ENCODE measurements at regions of chr11 and their contacts with region 1.

Region 1: GRCh38 chr11:45110562-45110961 is 35.9 kb upstream of the PRDM11 start:
- DNase-seq: peak; percentile 64
- H3K4me3 ChIP-seq: no peak overlapping the region
- H3K27ac ChIP-seq: no peak overlapping the region
- H3K4me1 ChIP-seq: no peaks in the 10 kb centered on the region
- H3K27me3 ChIP-seq: peaks cover 6 to 7% of the 10 kb centered on the region in 2 experiments
- CTCF ChIP-seq: peak; percentile 52 to 68
- POLR2A ChIP-seq: no peak

Region 2: GRCh38 chr11:44993971-44994704 is 116.4 kb before region 1 on chr11:
- CTCF ChIA-PET with region 1: no interaction called
- POLR2A ChIA-PET with region 1: no interaction called
- dilution Hi-C with region 1: no loop called
- intact Hi-C with region 1: no loop called
- DNase-seq: no peak
- H3K4me3 ChIP-seq: no peak overlapping the region
- H3K27ac ChIP-seq: no peak overlapping the region
- H3K4me1 ChIP-seq: no peaks in the 10 kb centered on the region
- H3K27me3 ChIP-seq: peaks cover 2 to 5% of the 10 kb centered on the region in 2 experiments
- CTCF ChIP-seq: no peak
- POLR2A ChIP-seq: no peak

Region 3: DNA sequence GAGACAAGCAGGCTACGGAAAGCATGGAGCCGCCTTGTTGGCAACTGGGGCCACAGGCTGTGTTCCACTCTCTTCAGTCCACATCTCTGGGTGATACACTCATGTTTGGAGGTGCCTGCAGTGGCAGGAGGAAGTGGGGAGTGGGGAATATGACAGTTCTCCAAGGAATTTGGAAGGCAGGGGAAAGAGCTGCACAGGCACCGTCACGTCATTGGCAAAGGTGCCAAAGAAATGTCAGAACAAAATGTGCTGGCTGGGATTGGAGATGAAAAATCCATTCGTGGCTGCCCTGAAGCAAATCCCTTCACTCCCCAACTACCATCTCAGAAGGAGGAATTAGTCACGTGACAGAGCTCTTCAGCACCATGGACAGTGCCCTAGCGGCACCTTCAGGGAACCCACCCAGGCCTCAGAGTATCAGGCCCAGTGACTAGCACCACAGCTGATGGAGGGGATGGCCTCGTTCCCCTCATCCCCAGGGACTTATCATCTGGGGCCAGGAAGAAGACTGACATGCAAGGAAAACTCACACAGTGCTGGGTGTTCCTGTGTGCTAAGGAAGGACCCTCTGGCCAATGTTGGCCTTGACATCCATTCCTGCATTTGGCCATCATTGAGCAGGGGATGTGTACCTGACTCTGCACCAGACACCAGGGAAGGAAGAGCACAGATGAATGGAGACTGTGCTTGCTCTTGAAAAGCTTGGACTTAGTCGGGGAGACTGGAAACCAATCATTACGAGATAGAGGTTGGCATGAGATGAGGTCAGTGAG is 12.7 kb before region 1 on chr11:
- CTCF ChIA-PET with region 1: interaction called, 21 read pairs
- POLR2A ChIA-PET with region 1: no interaction called
- dilution Hi-C with region 1: no loop called
- intact Hi-C with region 1: no loop called
- DNase-seq: peak; percentile 43
- H3K4me3 ChIP-seq: no peak overlapping the region
- H3K27ac ChIP-seq: no peak overlapping the region
- H3K4me1 ChIP-seq: peaks cover 5% of the 10 kb centered on the region
- H3K27me3 ChIP-seq: peaks cover 0 to 3% of the 10 kb centered on the region in 2 experiments
- CTCF ChIP-seq: no peak
- POLR2A ChIP-seq: no peak

Region 4: DNA sequence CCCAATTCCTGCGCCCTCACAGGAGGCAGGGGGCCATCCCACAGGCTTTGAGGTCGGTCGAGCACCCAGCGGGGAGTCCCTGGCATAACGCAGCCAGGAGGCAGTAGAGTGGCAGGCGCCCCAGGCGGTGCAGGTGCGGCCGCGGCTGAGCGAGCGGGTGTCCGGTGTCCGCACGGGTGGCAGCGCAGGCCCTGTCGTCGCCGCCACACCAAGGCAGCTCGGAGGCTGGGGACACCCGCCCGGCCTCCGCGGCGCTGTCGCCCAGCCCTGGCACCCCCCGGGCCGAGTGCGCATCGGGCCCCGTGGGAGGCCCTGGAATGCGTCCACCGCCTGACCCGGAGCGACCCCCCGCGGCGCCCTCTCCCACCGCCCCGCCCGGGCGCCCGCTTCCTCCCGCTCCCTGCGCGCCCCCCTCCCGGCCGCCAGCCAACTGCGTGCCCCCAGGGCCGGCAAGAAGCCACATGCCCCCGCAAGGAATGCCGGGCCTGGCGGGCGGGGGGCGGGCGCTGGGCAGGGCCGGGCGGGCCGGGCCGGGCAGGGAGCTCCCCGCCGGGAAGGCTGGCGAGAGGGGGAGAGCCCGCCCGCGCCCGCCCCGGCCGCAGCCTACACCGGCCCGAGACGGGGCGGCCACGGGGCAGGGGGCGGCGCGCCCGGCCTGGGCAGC is 69.7 kb after region 1 on chr11:
- CTCF ChIA-PET with region 1: interaction called, 24 read pairs
- POLR2A ChIA-PET with region 1: no interaction called
- dilution Hi-C with region 1: no loop called
- intact Hi-C with region 1: loop called (anchors 5 kb)
- DNase-seq: peak; percentile 40
- H3K4me3 ChIP-seq: peak overlapping the region in 2 of 3 experiments; percentile 33
- H3K27ac ChIP-seq: peak overlapping the region; percentile 46
- H3K4me1 ChIP-seq: peaks cover 12% of the 10 kb centered on the region
- H3K27me3 ChIP-seq: no peaks in the 10 kb centered on the region
- CTCF ChIP-seq: peak; percentile 31 to 62
- POLR2A ChIP-seq: no peak

Region 5: GRCh38 chr11:45252134-45252855 is 141.7 kb after region 1 on chr11:
- CTCF ChIA-PET with region 1: interaction called, 29 read pairs
- POLR2A ChIA-PET with region 1: no interaction called
- dilution Hi-C with region 1: no loop called
- intact Hi-C with region 1: no loop called
- DNase-seq: peak; percentile 14
- H3K4me3 ChIP-seq: no peak overlapping the region
- H3K27ac ChIP-seq: no peak overlapping the region
- H3K4me1 ChIP-seq: no peaks in the 10 kb centered on the region
- H3K27me3 ChIP-seq: peaks cover 2 to 8% of the 10 kb centered on the region in 2 experiments
- CTCF ChIP-seq: peak; percentile 71 to 76
- POLR2A ChIP-seq: no peak

Region 6: DNA sequence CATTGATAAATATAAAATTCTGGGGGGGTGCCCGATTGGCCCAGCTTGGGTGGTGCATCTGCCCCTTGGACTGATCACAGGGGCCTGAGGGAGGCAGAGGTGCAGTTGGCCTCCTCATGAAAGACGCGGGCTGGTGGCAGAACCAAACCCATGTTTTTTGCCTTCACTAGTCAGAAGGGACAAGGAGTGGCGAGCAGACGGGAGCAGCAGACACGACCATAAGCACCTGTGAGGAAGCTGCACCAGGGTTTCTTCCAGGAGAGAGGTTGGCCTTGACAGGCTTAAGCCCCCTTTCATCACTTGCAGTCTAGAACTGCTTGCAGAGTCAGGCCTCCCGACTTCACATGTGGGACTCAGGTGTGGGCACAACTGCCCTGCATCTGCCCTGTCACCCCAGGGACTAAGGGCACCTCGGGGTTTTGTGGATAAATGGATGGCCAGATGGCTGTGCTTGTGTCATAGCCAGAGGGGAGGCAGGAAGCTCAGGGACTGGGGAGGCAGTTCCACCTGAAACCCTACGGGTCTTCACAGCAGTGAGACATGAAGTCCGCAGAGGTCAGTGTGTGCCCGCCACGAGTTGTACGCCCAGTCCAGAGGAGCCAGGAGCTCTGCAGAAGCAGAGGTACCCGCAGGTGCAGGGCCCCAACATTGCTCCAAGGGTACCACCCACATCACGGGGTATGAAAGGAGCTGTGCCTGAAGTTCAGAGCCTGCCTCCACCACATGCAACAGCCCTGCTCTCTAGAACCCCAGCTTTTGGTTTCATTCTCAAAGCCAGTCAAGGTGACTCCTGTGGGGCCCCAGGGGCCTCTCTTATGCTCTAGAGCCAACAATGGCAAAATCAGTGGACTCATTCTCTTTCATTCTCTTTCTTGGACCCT is 193.8 kb after region 1 on chr11:
- CTCF ChIA-PET with region 1: interaction called, 10 read pairs
- POLR2A ChIA-PET with region 1: no interaction called
- dilution Hi-C with region 1: no loop called
- intact Hi-C with region 1: no loop called
- DNase-seq: no peak
- H3K4me3 ChIP-seq: no peak overlapping the region
- H3K27ac ChIP-seq: no peak overlapping the region
- H3K4me1 ChIP-seq: no peaks in the 10 kb centered on the region
- H3K27me3 ChIP-seq: peaks cover 0 to 5% of the 10 kb centered on the region in 2 experiments
- CTCF ChIP-seq: no peak
- POLR2A ChIP-seq: no peak

Region 7: DNA sequence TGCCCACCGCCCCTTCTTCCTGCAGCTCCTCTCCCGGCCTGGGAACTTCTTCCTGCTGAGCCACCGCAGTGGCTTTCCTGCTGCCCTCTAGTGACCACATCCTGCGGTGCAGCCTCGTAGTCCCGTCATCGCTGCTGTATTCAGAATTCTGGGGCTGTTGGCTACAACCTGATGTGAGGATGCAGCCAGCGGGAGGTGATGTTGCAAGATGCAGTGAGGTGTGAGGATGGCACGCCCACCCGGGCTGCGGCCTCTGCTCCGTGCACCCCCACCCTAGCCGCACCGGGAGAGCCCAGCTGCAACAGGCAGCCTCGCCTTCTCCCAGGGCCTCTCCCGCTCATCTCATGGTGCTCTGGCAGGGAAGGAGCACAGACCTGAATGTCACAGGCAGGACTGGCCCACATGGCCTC is 544.8 kb after region 1 on chr11:
- CTCF ChIA-PET with region 1: no interaction called
- POLR2A ChIA-PET with region 1: no interaction called
- dilution Hi-C with region 1: no loop called
- intact Hi-C with region 1: no loop called
- DNase-seq: peak; percentile 78
- H3K4me3 ChIP-seq: no peak overlapping the region
- H3K27ac ChIP-seq: no peak overlapping the region
- H3K4me1 ChIP-seq: peaks cover 41% of the 10 kb centered on the region
- H3K27me3 ChIP-seq: no peaks in the 10 kb centered on the region
- CTCF ChIP-seq: peak; percentile 92 to 95
- POLR2A ChIP-seq: no peak

Measured in endothelial cell of umbilical vein (primary cell).